ENCODE measurements at regions of chr17 and their contacts with region 1.

Region 1: DNA sequence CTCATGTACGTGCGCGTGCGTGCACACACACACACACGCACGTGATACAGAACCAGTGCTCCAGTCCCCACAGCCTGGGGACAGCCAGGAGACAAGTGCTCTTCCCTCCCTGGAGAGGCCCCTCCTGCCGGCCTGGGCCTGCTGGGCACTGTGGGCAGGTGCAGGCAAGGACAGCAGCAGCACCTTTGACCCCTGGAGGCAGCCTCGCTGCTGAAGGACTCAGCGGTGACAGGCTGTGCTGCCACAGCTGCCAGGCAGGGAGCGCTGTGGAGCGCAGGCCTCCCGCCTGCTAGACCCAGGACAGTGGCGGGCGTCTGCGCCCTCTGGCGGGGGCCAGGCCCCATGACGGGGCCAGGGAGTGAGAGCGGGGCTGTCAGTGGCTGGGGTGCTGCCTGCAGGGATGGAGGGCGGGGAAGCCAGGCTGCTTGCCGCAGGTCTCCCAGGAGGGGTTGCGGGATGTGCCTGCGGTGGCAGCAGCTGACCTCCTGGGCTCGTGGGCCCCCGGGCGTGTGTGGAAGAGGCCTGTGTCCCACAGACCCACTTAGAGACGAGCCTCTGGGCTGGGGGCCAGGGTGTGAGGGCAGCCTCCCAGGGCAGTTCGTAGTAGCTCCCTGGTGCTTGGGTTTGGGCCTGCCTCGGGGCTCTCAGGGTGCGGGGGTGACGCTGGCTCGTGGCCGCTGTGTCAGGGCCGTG is 63.5 kb upstream of the PVALEF start:
- DNase-seq: peak; percentile 71 to 85
- H3K4me3 ChIP-seq: no peak overlapping the region
- H3K27ac ChIP-seq: no peak overlapping the region
- H3K4me1 ChIP-seq: peaks cover 0 to 22% (median 13%) of the 10 kb centered on the region in 4 donors
- H3K27me3 ChIP-seq: peaks cover 0 to 9% of the 10 kb centered on the region in 2 donors
- CTCF ChIP-seq: peak; percentile 100

Region 2: GRCh38 chr17:80426681-80427326 is 675.0 kb before region 1 on chr17:
- intact Hi-C with region 1: loop called (anchors 10 kb)
- DNase-seq: peak; percentile 61 to 77
- H3K4me3 ChIP-seq: no peak overlapping the region
- H3K27ac ChIP-seq: no peak overlapping the region
- H3K4me1 ChIP-seq: peaks cover 0 to 14% (median 4%) of the 10 kb centered on the region in 4 donors
- H3K27me3 ChIP-seq: no peaks in the 10 kb centered on the region
- CTCF ChIP-seq: peak; percentile 97 to 98

Region 3: DNA sequence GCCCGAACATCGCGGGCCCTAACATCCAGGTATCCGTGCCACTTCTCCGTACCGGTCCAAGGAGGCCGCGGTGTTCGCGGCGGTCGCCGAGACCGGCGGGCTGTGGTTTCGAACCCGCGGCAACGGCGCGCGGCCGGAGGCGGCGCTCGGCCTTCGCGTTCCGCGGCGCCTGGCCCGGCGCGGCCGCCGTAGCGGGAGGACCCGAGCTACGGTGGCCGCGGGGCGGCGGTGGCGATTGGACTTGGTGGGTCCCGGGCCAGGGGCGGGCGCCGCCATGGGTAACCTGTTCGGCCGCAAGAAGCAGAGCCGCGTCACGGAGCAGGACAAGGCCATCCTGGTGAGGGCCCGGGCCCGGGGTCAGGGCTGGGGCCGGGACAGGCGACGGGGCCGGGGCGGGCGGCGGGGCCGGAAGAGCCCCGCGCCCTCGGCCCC is 110.1 kb before region 1 on chr17 and contains the start of gene CHMP6:
- intact Hi-C with region 1: loop called (anchors 2 kb)
- DNase-seq: peak; percentile 60 to 80
- H3K4me3 ChIP-seq: peak within 1 kb of the TSS; percentile 77 to 98
- H3K27ac ChIP-seq: peak within 1 kb of the TSS; percentile 68 to 69
- H3K4me1 ChIP-seq: peaks cover 0 to 47% (median 34%) of the 10 kb centered on the region in 4 donors
- H3K27me3 ChIP-seq: no peaks in the 10 kb centered on the region
- CTCF ChIP-seq: peak in 1 of 2 experiments; percentile 42

Region 4: DNA sequence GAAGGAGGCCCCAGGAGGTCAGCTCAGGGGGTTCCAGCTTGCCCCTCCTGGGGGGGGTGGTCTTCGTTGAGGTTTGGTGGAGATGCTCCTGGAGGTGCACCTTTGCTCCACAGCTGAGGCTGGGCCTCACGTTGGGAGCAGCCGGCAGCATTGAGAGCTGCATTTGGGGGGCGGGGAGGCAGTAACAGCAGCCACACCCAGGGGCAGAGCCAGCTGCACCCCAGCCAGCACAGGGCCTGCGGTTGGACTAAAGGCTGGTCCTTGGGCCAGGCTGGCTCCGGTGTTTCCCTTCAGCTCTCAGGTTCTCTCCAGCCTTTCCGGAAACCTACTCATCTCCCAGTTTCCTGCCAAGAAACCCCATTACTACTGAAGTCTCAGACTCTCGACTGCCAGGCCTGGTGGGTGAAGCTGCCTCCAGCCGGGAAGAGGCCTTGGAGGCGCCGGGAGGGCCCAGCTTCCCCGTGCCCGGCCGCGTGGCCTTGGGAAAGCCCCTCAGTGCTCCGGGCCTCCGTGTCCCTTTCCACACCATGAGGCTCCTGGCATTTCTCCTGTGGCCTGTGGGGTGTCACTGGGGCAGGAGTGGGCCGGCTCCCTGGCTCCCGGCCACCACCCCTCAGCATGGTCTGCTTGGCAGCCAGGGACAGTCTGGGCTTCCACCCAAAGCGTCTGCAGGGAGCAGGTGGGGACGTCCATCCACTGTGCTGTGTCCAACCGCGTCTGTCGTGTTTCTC is 80.8 kb before region 1 on chr17:
- intact Hi-C with region 1: loop called (anchors 5 kb)
- DNase-seq: no peak
- H3K4me3 ChIP-seq: no peak overlapping the region
- H3K27ac ChIP-seq: peak overlapping the region in 1 of 2 donors; percentile 13
- H3K4me1 ChIP-seq: peaks cover 0 to 25% (median 19%) of the 10 kb centered on the region in 4 donors
- H3K27me3 ChIP-seq: peaks cover 0 to 30% of the 10 kb centered on the region in 2 donors
- CTCF ChIP-seq: no peak

Region 5: DNA sequence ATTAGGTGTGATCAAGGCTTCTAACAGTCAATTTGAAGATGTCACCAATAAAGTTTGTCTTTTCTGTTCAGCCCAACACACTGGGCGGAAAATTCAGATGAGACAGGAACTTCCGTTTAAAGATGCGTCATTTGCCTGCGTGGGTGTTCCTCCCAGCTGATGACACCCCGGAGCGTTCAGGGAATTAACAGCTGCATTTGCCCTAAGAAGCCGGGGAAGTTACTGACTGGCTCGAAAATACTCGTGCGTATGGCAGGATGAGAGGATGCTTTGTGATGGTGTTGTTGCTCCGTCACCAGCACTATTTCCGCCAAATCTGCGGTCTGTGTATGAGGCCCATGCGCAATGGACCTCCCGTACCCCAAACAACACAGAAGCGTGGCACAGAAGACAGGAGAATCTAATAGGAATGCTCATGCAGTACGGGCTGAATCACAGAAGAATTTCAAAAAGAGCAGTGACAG is 51.6 kb after region 1 on chr17:
- intact Hi-C with region 1: no loop called
- DNase-seq: no peak
- H3K4me3 ChIP-seq: no peak overlapping the region
- H3K27ac ChIP-seq: no peak overlapping the region
- H3K4me1 ChIP-seq: no peaks in the 10 kb centered on the region
- H3K27me3 ChIP-seq: peaks cover 0 to 36% of the 10 kb centered on the region in 2 donors
- CTCF ChIP-seq: no peak

Measured in tibial artery (tissue), 4 donors.